Left colon (tissue), 2 donors: ENCODE measurements at regions of chr7 and their contacts with region 1.

Region 1: GRCh38 chr7:55279080-55279845 is 85.9 kb upstream of the LANCL2 start:
- DNase-seq: no peak
- ATAC-seq: no peak

Region 2: DNA sequence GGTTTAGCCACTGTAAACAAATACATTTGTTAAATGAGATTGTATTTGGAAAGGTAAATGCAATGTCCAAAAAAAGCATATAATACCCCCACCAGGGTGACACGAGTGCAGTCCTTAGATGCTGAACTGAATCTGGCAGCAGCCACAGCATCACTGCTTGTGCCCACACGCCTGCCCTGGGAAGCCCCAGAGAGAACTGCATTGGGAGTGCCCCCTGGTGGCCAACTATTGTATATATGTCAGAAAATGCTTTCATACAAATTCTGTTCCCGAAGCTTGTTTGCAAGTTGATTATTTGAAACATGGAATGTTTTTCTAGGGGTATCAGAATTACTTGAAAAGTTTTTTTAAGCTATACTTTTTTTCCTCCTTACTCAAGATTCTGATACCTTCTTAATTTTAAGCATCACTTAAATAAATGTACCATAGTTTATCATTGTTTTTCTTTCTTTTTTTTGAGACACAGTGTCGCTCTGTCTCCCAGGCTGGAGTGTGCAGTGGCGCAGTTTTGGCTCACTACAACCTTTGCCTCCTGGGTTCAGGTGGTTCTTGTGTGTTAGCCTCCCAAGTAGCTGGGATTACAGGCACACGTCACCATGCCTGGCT is 136.0 kb after region 1 on chr7:
- intact Hi-C with region 1: loop called (anchors 5 to 10 kb)
- DNase-seq: peak; percentile 62 to 89
- ATAC-seq: peak; percentile 88